Activated CD4-positive, alpha-beta memory T cell treated with anti-CD3 and anti-CD28 coated beads, Interleukin-2, amount 10 ng/mL, durations not matched to agents 7 days and 5 days (primary cell): ENCODE measurements at regions of chr9 and their contacts with region 1.

Region 1: GRCh38 chr9:114906908-114907571 is 23.4 kb downstream of the TNFSF8 start:
- DNase-seq: peak; percentile 38
- H3K4me3 Mint-ChIP-seq: peak overlapping the region; percentile 59
- H3K27ac Mint-ChIP-seq: peak overlapping the region; percentile 92
- H3K4me1 Mint-ChIP-seq: peaks cover 68% of the 10 kb centered on the region
- H3K27me3 Mint-ChIP-seq: no peaks in the 10 kb centered on the region

Region 2: GRCh38 chr9:114696814-114697544 is 210.1 kb before region 1 on chr9:
- CTCF ChIA-PET with region 1: interaction called, 6 read pairs
- POLR2A ChIA-PET with region 1: interaction called, 61 read pairs
- DNase-seq: peak; percentile 85
- H3K4me3 Mint-ChIP-seq: peak overlapping the region; percentile 39
- H3K27ac Mint-ChIP-seq: peak overlapping the region; percentile 97
- H3K4me1 Mint-ChIP-seq: peaks cover 79% of the 10 kb centered on the region
- H3K27me3 Mint-ChIP-seq: peaks cover 34% of the 10 kb centered on the region

Region 3: DNA sequence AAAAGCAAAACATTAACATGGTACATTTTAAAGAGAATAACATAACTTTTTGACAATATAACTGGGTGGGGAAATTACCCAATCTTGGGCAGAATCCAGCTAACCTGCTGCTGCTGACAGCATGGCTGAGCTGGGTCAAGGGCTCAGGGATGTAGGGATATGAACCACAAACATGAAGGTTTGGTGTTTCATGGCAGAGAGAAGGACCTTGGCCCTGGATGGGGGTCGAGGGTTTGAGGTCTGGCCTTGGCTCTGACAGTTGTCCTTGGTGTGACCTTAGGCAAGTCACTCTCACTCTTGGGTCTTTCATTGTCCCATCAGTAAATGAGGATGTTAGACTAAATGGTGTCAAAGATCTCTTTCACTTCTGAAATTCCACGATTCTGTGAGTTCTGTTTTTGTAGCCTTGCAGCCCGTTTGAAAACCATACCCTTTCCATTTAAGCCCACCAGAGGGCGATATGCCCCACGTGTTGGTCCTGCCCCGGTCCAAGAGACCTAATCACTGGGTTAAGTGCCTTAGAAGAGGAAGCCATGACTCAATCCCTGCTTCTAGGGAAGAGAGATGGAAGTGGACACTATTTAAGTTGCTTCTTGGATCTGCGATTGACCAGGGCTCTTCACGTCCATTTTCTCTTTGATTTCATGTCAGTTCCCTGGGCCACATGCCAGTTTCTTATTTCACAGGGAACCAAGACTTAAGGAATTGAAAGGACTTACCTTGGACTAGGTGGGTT is 168.3 kb before region 1 on chr9:
- CTCF ChIA-PET with region 1: interaction called, 167 read pairs
- POLR2A ChIA-PET with region 1: interaction called, 25 read pairs
- DNase-seq: peak; percentile 80
- H3K4me3 Mint-ChIP-seq: no peak overlapping the region
- H3K27ac Mint-ChIP-seq: peak overlapping the region; percentile 64
- H3K4me1 Mint-ChIP-seq: peaks cover 59% of the 10 kb centered on the region
- H3K27me3 Mint-ChIP-seq: peaks cover 11% of the 10 kb centered on the region

Region 4: GRCh38 chr9:114919611-114920010 is 12.6 kb after region 1 on chr9:
- CTCF ChIA-PET with region 1: interaction called, 16 read pairs
- POLR2A ChIA-PET with region 1: interaction called, 133 read pairs
- DNase-seq: no peak
- H3K4me3 Mint-ChIP-seq: no peak overlapping the region
- H3K27ac Mint-ChIP-seq: no peak overlapping the region
- H3K4me1 Mint-ChIP-seq: peaks cover 78% of the 10 kb centered on the region
- H3K27me3 Mint-ChIP-seq: no peaks in the 10 kb centered on the region